Activated T-helper 2 cell treated with anti-CD3 and anti-CD28 coated beads, Interferon-gamma antibody, Interleukin-2, Interleukin-4, amounts not matched to agents 10 μg/mL and 5 μg/mL and 100 μg/mL, durations not matched to agents 14 hours and 24 hours and 36 hours (primary cell): ENCODE measurements at regions of chr7 and their contacts with region 1.

Region 1: DNA sequence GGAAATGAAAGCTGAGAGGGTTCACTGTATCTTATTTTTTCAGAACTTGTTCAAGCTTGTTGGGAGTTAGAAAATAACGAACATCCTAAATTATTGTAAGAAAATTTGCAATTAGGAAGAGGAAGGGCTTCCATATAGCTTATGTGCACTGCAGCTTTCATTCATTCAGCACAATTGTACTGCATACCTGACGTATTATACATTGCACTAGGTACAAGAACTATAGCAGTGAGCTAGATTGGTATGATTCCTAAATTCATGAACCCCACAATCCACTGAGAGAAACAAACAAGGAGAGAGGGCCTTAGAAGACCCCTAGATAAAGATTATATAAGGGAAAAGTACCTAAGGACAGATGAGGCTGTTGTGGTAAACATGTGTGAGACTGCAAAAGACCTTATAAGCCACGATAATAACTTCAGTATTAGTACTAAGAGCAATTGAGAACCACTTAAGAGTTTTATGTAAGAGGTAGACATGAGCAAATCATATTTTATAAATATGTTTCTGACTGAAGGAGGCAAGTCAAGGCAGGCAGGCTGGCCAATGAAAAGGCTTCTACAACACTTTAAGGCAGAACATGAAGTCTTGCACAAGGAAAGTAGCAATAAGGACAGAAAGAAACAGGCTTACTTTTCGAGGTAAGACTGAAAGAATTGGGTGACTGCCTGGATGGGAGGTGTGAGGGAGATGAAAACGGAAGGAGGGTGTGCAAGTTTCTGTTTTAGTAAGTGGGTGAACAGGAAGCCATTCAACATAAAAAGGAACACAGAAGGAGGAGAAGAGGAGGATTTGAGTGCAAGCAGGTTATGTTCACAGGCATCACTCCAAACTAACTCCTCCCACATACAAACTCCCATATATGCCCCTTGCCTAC is 77.9 kb upstream of the LRRN3 start:
- DNase-seq: peak; percentile 57
- H3K4me3 Mint-ChIP-seq: peak overlapping the region; percentile 52
- H3K27ac Mint-ChIP-seq: peak overlapping the region; percentile 82
- H3K4me1 Mint-ChIP-seq: peaks cover 65% of the 10 kb centered on the region
- H3K27me3 Mint-ChIP-seq: no peaks in the 10 kb centered on the region

Region 2: GRCh38 chr7:110909117-110909516 is 103.9 kb before region 1 on chr7:
- intact Hi-C with region 1: loop called (anchors 5 kb)
- DNase-seq: no peak
- H3K4me3 Mint-ChIP-seq: no peak overlapping the region
- H3K27ac Mint-ChIP-seq: no peak overlapping the region
- H3K4me1 Mint-ChIP-seq: peaks cover 44% of the 10 kb centered on the region
- H3K27me3 Mint-ChIP-seq: no peaks in the 10 kb centered on the region

Region 3: DNA sequence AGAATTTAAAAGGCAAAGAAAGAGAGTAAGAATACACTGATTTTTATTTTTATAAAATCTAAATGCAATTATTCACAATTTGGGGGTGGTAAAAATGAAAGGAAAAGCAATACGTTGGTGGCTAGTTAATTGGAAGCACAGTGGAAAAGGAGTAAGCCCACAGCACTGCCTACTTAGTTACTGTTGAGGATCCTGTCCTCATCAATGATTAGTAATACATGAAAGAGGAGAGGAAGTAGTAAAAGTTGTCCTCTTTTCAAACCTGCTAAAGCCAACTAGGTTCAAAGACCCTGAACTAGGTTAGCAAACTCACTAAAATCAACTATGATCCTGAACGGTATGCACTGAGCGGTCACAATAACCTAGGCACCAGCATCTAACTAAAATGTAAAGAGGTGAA is 25.1 kb after region 1 on chr7:
- intact Hi-C with region 1: no loop called
- DNase-seq: no peak
- H3K4me3 Mint-ChIP-seq: no peak overlapping the region
- H3K27ac Mint-ChIP-seq: no peak overlapping the region
- H3K4me1 Mint-ChIP-seq: peaks cover 18% of the 10 kb centered on the region
- H3K27me3 Mint-ChIP-seq: no peaks in the 10 kb centered on the region

Region 4: GRCh38 chr7:111083413-111083812 is 70.4 kb after region 1 on chr7:
- intact Hi-C with region 1: loop called (anchors 1 kb)
- DNase-seq: peak; percentile 70
- H3K4me3 Mint-ChIP-seq: peak overlapping the region; percentile 64
- H3K27ac Mint-ChIP-seq: peak overlapping the region; percentile 94
- H3K4me1 Mint-ChIP-seq: peaks cover 72% of the 10 kb centered on the region
- H3K27me3 Mint-ChIP-seq: no peaks in the 10 kb centered on the region